Activated CD4-positive, alpha-beta T cell treated with anti-CD3 and anti-CD28 coated beads for 36 hours (primary cell): ENCODE measurements at regions of chr20 and their contacts with region 1.

Region 1: DNA sequence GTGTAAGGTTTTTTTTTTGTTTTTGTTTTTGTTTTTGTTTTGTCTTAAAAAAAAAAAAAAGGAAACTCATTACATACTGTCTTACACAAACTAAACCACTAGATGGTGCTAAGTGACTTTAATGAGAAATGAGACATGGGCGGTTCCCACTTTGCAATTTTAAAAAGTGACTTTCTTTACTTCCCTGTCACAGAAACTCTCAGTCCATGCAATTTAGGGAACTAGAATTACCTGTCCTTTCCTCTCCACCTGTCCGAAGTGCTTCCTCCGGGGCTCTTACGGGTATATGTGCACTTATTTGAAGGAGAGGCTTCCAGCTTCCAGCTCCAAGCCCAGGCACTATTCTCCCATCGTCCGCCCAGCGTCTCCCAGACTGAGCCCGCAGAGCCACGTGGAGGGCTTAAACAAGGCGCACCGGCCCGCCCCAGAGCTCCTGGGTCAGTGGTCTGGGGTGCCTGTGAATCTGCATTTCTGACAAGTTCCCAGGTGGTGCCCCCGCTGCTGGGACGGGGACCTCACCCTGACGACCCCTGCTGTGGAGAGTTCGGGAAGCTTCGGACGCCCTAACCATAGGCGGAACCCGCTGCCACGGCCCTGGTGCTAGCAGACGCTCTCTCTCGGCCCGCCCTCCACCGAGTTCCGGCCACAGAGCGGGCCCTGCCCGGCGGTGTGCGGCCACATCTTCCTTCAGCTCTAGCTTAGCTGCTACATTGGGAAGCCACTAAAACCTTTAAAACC is 26.1 kb downstream of the BFSP1 start:
- DNase-seq: peak; percentile 53
- ATAC-seq: peak; percentile 68
- H3K4me3 Mint-ChIP-seq: peak overlapping the region; percentile 70
- H3K27ac Mint-ChIP-seq: peak overlapping the region; percentile 80
- H3K4me1 Mint-ChIP-seq: peaks cover 27% of the 10 kb centered on the region
- H3K27me3 Mint-ChIP-seq: no peaks in the 10 kb centered on the region

Region 2: DNA sequence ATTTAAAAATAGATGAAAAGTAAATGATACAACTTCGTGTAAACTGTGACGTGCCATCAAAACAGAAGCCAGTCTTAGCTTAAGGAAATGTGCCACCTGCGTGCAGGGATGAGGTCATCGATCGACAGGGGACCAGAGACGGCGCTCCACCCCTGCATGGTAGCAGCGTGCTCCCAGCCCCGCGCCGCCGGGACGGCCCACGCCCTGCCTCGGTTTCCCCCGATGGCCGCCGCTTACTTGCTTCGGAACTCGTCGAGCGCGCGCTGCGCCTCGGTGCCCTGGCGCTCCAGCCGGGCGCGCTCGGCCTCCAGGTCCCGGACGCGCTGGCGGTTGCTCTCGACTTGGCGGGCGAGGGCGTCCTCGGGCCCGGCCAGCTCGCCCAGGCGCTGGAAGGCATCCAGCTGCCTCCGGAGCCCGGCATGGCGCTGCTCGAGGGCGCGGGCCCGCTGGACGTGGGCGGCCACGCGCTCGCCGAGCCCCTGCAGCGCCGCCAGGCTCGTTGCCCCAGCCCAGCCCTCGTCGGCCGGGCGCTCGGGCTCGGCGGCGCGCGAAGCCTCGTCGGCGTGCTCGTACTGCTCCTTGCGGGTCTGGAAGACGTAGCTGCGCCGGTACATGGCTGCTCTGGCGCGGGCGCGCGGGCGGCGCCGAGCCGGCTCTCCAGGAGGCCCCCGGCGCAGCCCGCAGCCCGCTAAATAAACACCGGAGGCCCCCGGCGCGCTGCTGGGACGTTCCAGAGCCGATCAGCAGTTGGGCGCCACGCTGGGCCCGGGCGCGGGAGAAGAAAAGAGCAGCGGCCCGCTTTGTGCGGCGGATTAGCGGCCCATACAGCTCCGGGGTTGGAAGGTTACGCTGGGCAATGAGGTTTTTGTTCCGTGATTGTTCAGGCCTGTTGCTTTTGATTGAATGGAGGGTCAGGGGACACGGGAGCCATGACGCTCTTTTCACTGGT is 25.9 kb after region 1 on chr20 and contains the start of gene BFSP1:
- CTCF ChIA-PET with region 1: interaction called, 20 read pairs
- POLR2A ChIA-PET with region 1: no interaction called
- intact Hi-C with region 1: loop called (anchors 1 to 2 kb)
- DNase-seq: peak; percentile 78
- ATAC-seq: peak; percentile 81
- H3K4me3 Mint-ChIP-seq: peak within 1 kb of the TSS; percentile 70
- H3K27ac Mint-ChIP-seq: peak within 1 kb of the TSS; percentile 68
- H3K4me1 Mint-ChIP-seq: peaks cover 16% of the 10 kb centered on the region
- H3K27me3 Mint-ChIP-seq: peaks cover 8% of the 10 kb centered on the region
- total RNA-seq, gene BFSP1: 0.12 to 0.23 TPM

Region 3: DNA sequence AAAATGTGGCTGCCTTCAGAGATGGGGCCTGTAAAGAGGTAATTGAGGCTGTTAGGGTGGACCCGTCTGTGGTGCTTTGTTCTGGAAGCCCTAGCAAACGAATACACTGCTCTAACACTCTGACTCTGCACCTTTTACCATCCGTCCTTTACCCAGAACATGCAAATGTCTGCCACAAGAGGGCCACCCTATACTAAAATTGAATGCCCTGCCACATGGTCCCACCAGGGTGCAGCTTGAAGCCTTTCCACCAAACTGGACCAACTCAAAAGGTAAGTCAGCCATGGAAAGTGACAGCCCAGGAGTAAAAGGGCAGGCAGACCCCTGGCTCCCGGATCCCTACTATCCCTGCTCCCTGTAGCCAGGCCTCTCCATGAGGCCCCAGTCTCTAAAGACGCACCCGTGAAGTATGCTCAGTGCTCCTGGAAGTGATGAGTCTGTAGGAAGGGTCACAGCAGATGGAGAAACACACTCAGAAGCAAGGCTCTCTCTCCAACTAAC is 31.9 kb after region 1 on chr20:
- CTCF ChIA-PET with region 1: interaction called, 20 read pairs
- POLR2A ChIA-PET with region 1: no interaction called
- intact Hi-C with region 1: loop called in 1 of 2 experiments (anchors 2 kb)
- DNase-seq: peak; percentile 78
- ATAC-seq: peak; percentile 92
- H3K4me3 Mint-ChIP-seq: no peak overlapping the region
- H3K27ac Mint-ChIP-seq: no peak overlapping the region
- H3K4me1 Mint-ChIP-seq: peaks cover 14% of the 10 kb centered on the region
- H3K27me3 Mint-ChIP-seq: peaks cover 11% of the 10 kb centered on the region

Region 4: DNA sequence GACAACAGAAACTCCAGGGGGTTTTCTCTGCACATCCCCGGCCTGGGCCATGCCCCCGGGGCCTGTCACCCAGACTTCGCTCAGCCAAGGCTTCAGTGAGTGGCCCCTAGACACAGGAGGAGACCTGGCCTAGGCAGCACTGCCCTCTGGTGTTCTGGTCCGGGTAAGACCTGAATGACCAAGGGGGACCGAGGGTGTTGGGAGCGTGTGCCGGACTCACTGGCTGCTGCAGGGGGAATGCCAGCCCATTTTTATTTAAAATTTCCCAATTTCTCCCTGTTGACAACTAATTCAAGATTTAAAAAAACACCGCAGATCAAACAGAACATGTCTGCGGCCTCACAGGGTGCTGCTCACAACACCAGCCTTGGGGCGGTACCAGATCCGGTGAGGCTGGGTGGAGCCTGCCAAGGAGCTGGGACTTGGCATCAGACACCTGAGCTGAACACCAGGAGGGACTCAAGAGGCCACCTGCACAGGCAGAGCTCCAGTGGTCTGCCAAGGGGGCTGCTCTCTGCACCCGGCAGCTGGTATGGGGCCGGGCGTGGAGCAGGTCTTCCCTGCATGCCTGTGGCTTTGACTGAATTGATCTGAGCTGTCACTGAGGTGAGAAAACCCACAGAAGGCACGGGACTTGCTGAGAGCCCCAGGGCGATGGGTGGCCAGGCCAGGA is 112.6 kb after region 1 on chr20:
- CTCF ChIA-PET with region 1: interaction called, 27 read pairs
- POLR2A ChIA-PET with region 1: no interaction called
- intact Hi-C with region 1: loop called (anchors 1 kb)
- DNase-seq: peak; percentile 72
- ATAC-seq: peak; percentile 71
- H3K4me3 Mint-ChIP-seq: no peak overlapping the region
- H3K27ac Mint-ChIP-seq: no peak overlapping the region
- H3K4me1 Mint-ChIP-seq: peaks cover 2% of the 10 kb centered on the region
- H3K27me3 Mint-ChIP-seq: no peaks in the 10 kb centered on the region

Region 5: DNA sequence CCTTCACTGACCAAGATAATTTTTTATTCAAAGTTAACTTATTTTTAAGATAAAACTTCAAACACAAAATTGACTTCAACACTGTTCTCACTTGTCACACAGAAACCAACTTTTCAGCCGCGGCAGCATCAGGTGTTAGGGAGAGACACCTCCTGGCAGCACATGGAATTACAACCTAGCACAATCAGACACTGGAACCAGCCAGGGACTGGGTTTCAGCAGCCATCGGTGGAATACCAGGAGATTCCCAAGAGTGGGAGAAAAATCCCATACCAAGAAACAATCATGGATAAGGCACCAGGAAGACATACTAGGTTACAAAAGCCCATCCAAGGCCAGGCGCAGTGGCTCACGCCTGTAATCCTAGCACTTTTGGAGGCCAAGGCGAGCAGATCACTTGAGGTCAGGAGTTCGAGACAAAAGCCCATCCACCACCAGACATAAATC is 393.5 kb after region 1 on chr20:
- CTCF ChIA-PET with region 1: interaction called, 33 read pairs
- POLR2A ChIA-PET with region 1: no interaction called
- intact Hi-C with region 1: loop called (anchors 1 kb)
- DNase-seq: peak; percentile 80
- ATAC-seq: peak; percentile 47
- H3K4me3 Mint-ChIP-seq: no peak overlapping the region
- H3K27ac Mint-ChIP-seq: no peak overlapping the region
- H3K4me1 Mint-ChIP-seq: peaks cover 17% of the 10 kb centered on the region
- H3K27me3 Mint-ChIP-seq: peaks cover 27% of the 10 kb centered on the region

Region 6: DNA sequence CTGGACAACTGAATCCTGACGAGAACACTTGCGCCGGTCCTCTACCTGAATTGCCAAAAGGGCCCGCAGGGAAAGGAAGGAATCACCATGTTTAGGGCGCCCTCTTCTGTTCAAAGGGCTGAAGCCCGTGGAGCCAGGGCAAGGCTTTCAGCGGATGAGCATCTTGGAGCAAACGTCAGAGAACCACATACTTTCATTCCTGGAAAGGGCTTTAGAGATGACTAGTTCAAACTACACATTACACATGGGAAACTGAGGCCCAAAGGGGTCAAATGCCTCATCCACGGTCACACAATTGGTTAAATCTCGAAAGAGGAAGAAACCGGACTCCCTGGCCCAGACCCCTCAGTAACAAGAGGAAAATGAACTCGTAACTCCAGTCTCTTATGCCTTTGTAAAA is 771.8 kb after region 1 on chr20:
- CTCF ChIA-PET with region 1: no interaction called
- POLR2A ChIA-PET with region 1: no interaction called
- intact Hi-C with region 1: loop called (anchors 2 to 10 kb)
- DNase-seq: peak; percentile 81
- ATAC-seq: peak; percentile 93
- H3K4me3 Mint-ChIP-seq: no peak overlapping the region
- H3K27ac Mint-ChIP-seq: no peak overlapping the region
- H3K4me1 Mint-ChIP-seq: no peaks in the 10 kb centered on the region
- H3K27me3 Mint-ChIP-seq: peaks cover 33% of the 10 kb centered on the region